MCF 10A (cell line): ENCODE measurements at regions of chr5 and their contacts with region 1.

Region 1: GRCh38 chr5:149895416-149896345 is 48.9 kb downstream of the PDE6A start:
- DNase-seq: peak; percentile 87
- H3K4me3 Mint-ChIP-seq: peak overlapping the region; percentile 40
- H3K27ac Mint-ChIP-seq: peak overlapping the region; percentile 84
- H3K4me1 Mint-ChIP-seq: peaks cover 42% of the 10 kb centered on the region
- H3K27me3 Mint-ChIP-seq: no peaks in the 10 kb centered on the region
- CTCF ChIP-seq: no peak

Region 2: GRCh38 chr5:149345147-149345875 is 550.4 kb before region 1 on chr5 and contains the start of gene GRPEL2:
- CTCF ChIA-PET with region 1: no interaction called
- POLR2A ChIA-PET with region 1: no interaction called
- intact Hi-C with region 1: no loop called
- DNase-seq: peak; percentile 99
- H3K4me3 Mint-ChIP-seq: peak within 1 kb of the TSS; percentile 96
- H3K27ac Mint-ChIP-seq: peak within 1 kb of the TSS; percentile 94
- H3K4me1 Mint-ChIP-seq: peaks cover 22% of the 10 kb centered on the region
- H3K27me3 Mint-ChIP-seq: no peaks in the 10 kb centered on the region
- CTCF ChIP-seq: no peak
- total RNA-seq, gene GRPEL2: 69.5 and 86.6 TPM in 2 replicates

Region 3: GRCh38 chr5:149860801-149861322 is 34.8 kb before region 1 on chr5:
- CTCF ChIA-PET with region 1: interaction called, 5 read pairs
- POLR2A ChIA-PET with region 1: interaction called, 8 read pairs
- intact Hi-C with region 1: loop called (anchors 1 kb)
- DNase-seq: peak; percentile 94
- H3K4me3 Mint-ChIP-seq: no peak overlapping the region
- H3K27ac Mint-ChIP-seq: peak overlapping the region; percentile 21
- H3K4me1 Mint-ChIP-seq: peaks cover 38% of the 10 kb centered on the region
- H3K27me3 Mint-ChIP-seq: no peaks in the 10 kb centered on the region
- CTCF ChIP-seq: no peak

Region 4: GRCh38 chr5:149913436-149914419 is 18.0 kb after region 1 on chr5:
- CTCF ChIA-PET with region 1: interaction called, 4 read pairs
- POLR2A ChIA-PET with region 1: interaction called, 68 read pairs
- intact Hi-C with region 1: no loop called
- DNase-seq: no peak
- H3K4me3 Mint-ChIP-seq: no peak overlapping the region
- H3K27ac Mint-ChIP-seq: no peak overlapping the region
- H3K4me1 Mint-ChIP-seq: peaks cover 57% of the 10 kb centered on the region
- H3K27me3 Mint-ChIP-seq: no peaks in the 10 kb centered on the region
- CTCF ChIP-seq: no peak

Region 5: GRCh38 chr5:149932445-149933350 is 37.0 kb after region 1 on chr5:
- CTCF ChIA-PET with region 1: interaction called, 15 read pairs
- POLR2A ChIA-PET with region 1: interaction called, 72 read pairs
- intact Hi-C with region 1: no loop called
- DNase-seq: no peak
- H3K4me3 Mint-ChIP-seq: no peak overlapping the region
- H3K27ac Mint-ChIP-seq: no peak overlapping the region
- H3K4me1 Mint-ChIP-seq: peaks cover 51% of the 10 kb centered on the region
- H3K27me3 Mint-ChIP-seq: no peaks in the 10 kb centered on the region
- CTCF ChIP-seq: no peak

Region 6: DNA sequence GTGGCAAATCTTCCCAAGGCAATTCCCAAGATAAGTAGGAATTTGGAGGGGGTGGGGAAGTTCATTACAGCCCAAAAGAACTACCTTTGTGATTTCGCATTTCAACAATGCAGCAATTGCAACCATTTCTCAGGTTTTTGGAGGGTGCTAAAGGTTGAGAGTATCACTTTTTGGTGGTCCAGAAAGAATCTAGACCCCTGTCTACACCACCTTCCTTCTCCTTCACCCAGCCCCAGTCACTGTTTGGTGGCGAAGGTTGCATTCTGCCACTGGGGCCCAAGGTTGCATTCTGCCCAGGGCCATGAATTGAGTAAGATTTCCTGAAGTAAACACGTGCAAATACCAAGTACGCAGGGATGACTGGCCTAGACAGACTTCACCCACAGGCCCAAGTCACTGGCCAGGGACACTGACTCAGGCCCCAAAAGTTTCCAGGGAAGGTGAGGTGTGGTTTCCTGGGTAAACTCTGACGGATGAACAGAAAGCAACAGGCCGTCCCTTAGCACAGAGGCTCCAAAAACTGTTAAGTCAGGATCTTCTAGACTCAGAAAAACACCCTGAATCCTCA is 43.2 kb after region 1 on chr5:
- CTCF ChIA-PET with region 1: interaction called, 15 read pairs
- POLR2A ChIA-PET with region 1: interaction called, 72 read pairs
- intact Hi-C with region 1: loop called (anchors 2 kb)
- DNase-seq: peak; percentile 100
- H3K4me3 Mint-ChIP-seq: peak overlapping the region; percentile 55
- H3K27ac Mint-ChIP-seq: peak overlapping the region; percentile 98
- H3K4me1 Mint-ChIP-seq: peaks cover 77% of the 10 kb centered on the region
- H3K27me3 Mint-ChIP-seq: no peaks in the 10 kb centered on the region
- CTCF ChIP-seq: no peak

Region 7: DNA sequence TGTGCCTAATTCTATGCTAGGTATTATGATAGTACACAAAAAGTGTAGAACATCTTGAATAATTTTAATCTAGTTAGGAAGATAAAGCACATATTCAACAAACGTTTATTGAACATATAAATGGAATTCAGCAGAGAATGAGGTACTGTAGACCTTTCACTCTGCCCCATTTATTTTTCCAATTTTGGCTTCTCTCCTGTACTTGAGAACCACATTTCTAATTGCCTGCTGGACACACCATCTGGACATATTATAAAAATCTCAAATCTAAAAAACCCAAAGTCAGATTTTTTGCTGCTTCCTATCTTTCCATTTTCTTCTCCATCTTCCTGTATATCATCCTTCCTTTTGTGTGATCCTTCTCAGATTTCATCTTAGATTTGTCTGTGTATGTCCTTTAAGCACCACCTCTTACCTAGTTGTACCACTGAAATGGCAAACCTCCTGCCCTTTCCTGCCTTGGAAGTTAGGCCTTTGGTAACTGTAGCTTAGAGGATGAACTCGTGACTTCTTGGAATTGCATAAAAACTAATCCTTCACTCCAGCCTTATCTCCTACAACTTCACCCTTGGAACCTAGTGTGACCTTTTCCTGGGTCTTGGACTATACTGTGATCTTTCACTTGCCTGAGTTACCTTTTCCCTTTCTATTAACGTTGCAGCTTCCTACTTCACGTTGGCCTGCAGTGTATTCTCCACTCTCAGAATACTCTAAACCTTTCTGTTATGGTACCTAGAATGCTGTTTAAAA is 73.7 kb after region 1 on chr5:
- CTCF ChIA-PET with region 1: interaction called, 10 read pairs
- POLR2A ChIA-PET with region 1: interaction called, 3 read pairs
- intact Hi-C with region 1: no loop called
- DNase-seq: no peak
- H3K4me3 Mint-ChIP-seq: no peak overlapping the region
- H3K27ac Mint-ChIP-seq: no peak overlapping the region
- H3K4me1 Mint-ChIP-seq: peaks cover 48% of the 10 kb centered on the region
- H3K27me3 Mint-ChIP-seq: no peaks in the 10 kb centered on the region
- CTCF ChIP-seq: no peak